Left cardiac atrium (tissue), 4 donors: ENCODE measurements at regions of chr20 and their contacts with region 1.

Region 1: DNA sequence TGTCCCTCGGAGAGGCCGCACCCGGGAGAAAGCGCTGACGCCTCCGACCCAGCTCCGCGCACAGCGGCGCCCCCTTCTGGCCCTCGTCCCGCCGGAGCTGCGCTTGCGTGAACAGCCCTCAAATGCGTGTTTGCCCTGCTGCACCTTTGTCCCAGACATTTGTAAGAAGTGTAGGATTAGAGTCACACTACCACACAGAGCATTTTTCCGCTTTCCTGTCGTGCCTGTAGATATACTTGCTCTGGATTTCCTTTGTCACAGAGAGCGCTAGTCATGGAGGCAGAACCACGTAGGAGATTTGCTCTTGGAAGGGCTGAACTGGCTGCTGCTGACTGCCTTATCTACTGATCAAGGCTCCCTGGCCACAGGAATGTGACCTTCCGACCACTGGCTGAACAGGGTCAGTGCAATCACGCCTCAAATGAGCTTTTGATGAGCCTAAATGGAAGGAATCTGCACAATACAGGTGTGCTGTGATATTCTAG is 62.3 kb downstream of the PAX1 start:
- DNase-seq: no peak
- ATAC-seq: no peak

Region 2: GRCh38 chr20:21832442-21833385 is 64.9 kb after region 1 on chr20:
- intact Hi-C with region 1: loop called in 1 of 2 experiments (anchors 10 kb)
- DNase-seq: no peak
- ATAC-seq: peak in 1 of 2 donors; percentile 25

Region 3: GRCh38 chr20:21968486-21968885 is 200.7 kb after region 1 on chr20:
- intact Hi-C with region 1: no loop called
- DNase-seq: no peak
- ATAC-seq: no peak